Natural killer cell (primary cell): ENCODE measurements at regions of chr10 and their contacts with region 1.

Region 1: GRCh38 chr10:88880282-88881076 is 434 bp downstream of the STAMBPL1 start:
- DNase-seq: peak; percentile 69 to 84
- ATAC-seq: peak; percentile 75 to 91 (median 80)
- H3K4me3 ChIP-seq: peak overlapping the region; percentile 89
- H3K4me3 Mint-ChIP-seq: peak overlapping the region; percentile 98
- H3K27ac ChIP-seq: peak overlapping the region; percentile 93
- H3K27ac Mint-ChIP-seq: peak overlapping the region; percentile 88 to 97
- H3K4me1 ChIP-seq: peaks cover 14% of the 10 kb centered on the region
- H3K4me1 Mint-ChIP-seq: peaks cover 50 to 59% of the 10 kb centered on the region in 2 donors
- H3K27me3 ChIP-seq: no peaks in the 10 kb centered on the region
- H3K27me3 Mint-ChIP-seq: peaks cover 0 to 4% of the 10 kb centered on the region in 2 donors
- CTCF ChIP-seq: no peak

Region 2: DNA sequence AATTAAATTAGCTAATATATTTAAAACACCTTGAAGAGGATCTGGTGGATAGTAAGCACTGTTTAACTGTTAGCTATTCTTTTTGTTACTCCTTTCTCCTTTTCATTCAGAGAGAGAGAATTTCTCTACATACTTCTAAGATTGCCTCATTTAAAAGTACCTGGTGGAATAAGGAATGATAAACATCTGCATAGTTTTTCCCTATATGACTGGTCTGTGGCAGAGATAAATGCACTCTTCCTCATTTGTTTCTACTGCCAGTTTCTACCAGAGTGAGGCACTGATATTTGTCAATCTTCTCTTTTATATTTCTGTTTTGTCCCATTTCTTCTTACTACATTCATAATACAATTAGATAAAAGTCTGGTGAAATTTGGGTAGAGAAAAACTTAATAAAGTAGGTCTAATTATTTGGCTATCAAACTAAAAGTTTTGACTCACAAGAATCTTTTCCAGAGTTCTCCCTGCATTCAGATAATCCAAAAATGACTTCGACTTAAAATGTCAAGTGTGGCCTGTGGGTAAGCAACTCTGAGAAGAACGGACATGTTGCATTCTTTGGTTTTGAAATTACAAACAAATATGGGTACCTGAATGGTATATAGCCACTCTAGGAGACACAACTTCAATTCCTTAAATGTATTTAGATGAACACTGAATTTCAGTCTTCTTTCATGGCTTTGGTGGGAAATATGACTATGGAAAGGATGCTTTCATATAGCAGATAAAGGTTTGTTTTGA is 336.2 kb before region 1 on chr10:
- intact Hi-C with region 1: no loop called
- DNase-seq: no peak
- ATAC-seq: no peak
- H3K4me3 ChIP-seq: no peak overlapping the region
- H3K4me3 Mint-ChIP-seq: no peak overlapping the region
- H3K27ac ChIP-seq: no peak overlapping the region
- H3K27ac Mint-ChIP-seq: no peak overlapping the region
- H3K4me1 ChIP-seq: no peaks in the 10 kb centered on the region
- H3K4me1 Mint-ChIP-seq: no peaks in the 10 kb centered on the region
- H3K27me3 ChIP-seq: no peaks in the 10 kb centered on the region
- H3K27me3 Mint-ChIP-seq: no peaks in the 10 kb centered on the region
- CTCF ChIP-seq: no peak

Region 3: GRCh38 chr10:88783724-88784123 is 96.8 kb before region 1 on chr10:
- intact Hi-C with region 1: no loop called
- DNase-seq: no peak
- ATAC-seq: peak in 2 of 3 donors; percentile 41 to 43
- H3K4me3 ChIP-seq: no peak overlapping the region
- H3K4me3 Mint-ChIP-seq: peak overlapping the region; percentile 22
- H3K27ac ChIP-seq: no peak overlapping the region
- H3K27ac Mint-ChIP-seq: no peak overlapping the region
- H3K4me1 ChIP-seq: no peaks in the 10 kb centered on the region
- H3K4me1 Mint-ChIP-seq: peaks cover 14 to 16% of the 10 kb centered on the region in 2 donors
- H3K27me3 ChIP-seq: no peaks in the 10 kb centered on the region
- H3K27me3 Mint-ChIP-seq: peaks cover 2 to 8% of the 10 kb centered on the region in 2 donors
- CTCF ChIP-seq: no peak

Region 4: GRCh38 chr10:88826388-88826787 is 54.1 kb before region 1 on chr10:
- intact Hi-C with region 1: loop called (anchors 2 kb)
- DNase-seq: peak in 1 of 2 donors; percentile 29
- ATAC-seq: no peak
- H3K4me3 ChIP-seq: no peak overlapping the region
- H3K4me3 Mint-ChIP-seq: peak overlapping the region; percentile 66
- H3K27ac ChIP-seq: peak overlapping the region; percentile 59
- H3K27ac Mint-ChIP-seq: peak overlapping the region; percentile 82 to 85
- H3K4me1 ChIP-seq: peaks cover 20% of the 10 kb centered on the region
- H3K4me1 Mint-ChIP-seq: peaks cover 44 to 53% of the 10 kb centered on the region in 2 donors
- H3K27me3 ChIP-seq: no peaks in the 10 kb centered on the region
- H3K27me3 Mint-ChIP-seq: no peaks in the 10 kb centered on the region
- CTCF ChIP-seq: no peak

Region 5: GRCh38 chr10:88835096-88835909 is 45.2 kb before region 1 on chr10:
- intact Hi-C with region 1: loop called (anchors 2 kb)
- DNase-seq: peak; percentile 76 to 94
- ATAC-seq: peak; percentile 94 to 97 (median 96)
- H3K4me3 ChIP-seq: no peak overlapping the region
- H3K4me3 Mint-ChIP-seq: no peak overlapping the region
- H3K27ac ChIP-seq: no peak overlapping the region
- H3K27ac Mint-ChIP-seq: no peak overlapping the region
- H3K4me1 ChIP-seq: peaks cover 5% of the 10 kb centered on the region
- H3K4me1 Mint-ChIP-seq: peaks cover 28 to 30% of the 10 kb centered on the region in 2 donors
- H3K27me3 ChIP-seq: no peaks in the 10 kb centered on the region
- H3K27me3 Mint-ChIP-seq: no peaks in the 10 kb centered on the region
- CTCF ChIP-seq: peak; percentile 94